CD8-positive, alpha-beta T cell (primary cell): ENCODE measurements at regions of chr20 and their contacts with region 1.

Region 1: GRCh38 chr20:51541189-51542032 is 1.1 kb downstream of the NFATC2 start:
- DNase-seq: peak; percentile 63 to 96 (median 81)
- ATAC-seq: peak; percentile 76
- H3K4me3 ChIP-seq: peak overlapping the region; percentile 57 to 82
- H3K4me3 Mint-ChIP-seq: peak overlapping the region; percentile 97
- H3K27ac ChIP-seq: peak overlapping the region; percentile 76 to 92
- H3K27ac Mint-ChIP-seq: peak overlapping the region; percentile 99
- H3K4me1 ChIP-seq: peaks cover 52% of the 10 kb centered on the region
- H3K4me1 Mint-ChIP-seq: peaks cover 57% of the 10 kb centered on the region
- H3K27me3 ChIP-seq: no peaks in the 10 kb centered on the region
- H3K27me3 Mint-ChIP-seq: no peaks in the 10 kb centered on the region
- CTCF ChIP-seq: no peak

Region 2: GRCh38 chr20:51298141-51298749 is 243.2 kb before region 1 on chr20:
- CTCF ChIA-PET with region 1: no interaction called
- POLR2A ChIA-PET with region 1: no interaction called
- intact Hi-C with region 1: no loop called
- DNase-seq: no peak
- ATAC-seq: no peak
- H3K4me3 ChIP-seq: no peak overlapping the region
- H3K4me3 Mint-ChIP-seq: no peak overlapping the region
- H3K27ac ChIP-seq: no peak overlapping the region
- H3K27ac Mint-ChIP-seq: no peak overlapping the region
- H3K4me1 ChIP-seq: no peaks in the 10 kb centered on the region
- H3K4me1 Mint-ChIP-seq: no peaks in the 10 kb centered on the region
- H3K27me3 ChIP-seq: no peaks in the 10 kb centered on the region
- H3K27me3 Mint-ChIP-seq: peaks cover 16% of the 10 kb centered on the region
- CTCF ChIP-seq: no peak

Region 3: GRCh38 chr20:51385646-51386530 is 155.5 kb before region 1 on chr20:
- CTCF ChIA-PET with region 1: interaction called, 7 read pairs
- POLR2A ChIA-PET with region 1: no interaction called
- intact Hi-C with region 1: loop called in 1 of 2 experiments (anchors 5 kb)
- DNase-seq: peak in 6 of 9 experiments; percentile 7 to 71 (median 31)
- ATAC-seq: peak; percentile 56
- H3K4me3 ChIP-seq: no peak overlapping the region
- H3K4me3 Mint-ChIP-seq: no peak overlapping the region
- H3K27ac ChIP-seq: peak overlapping the region in 1 of 2 experiments; percentile 23
- H3K27ac Mint-ChIP-seq: peak overlapping the region; percentile 75
- H3K4me1 ChIP-seq: peaks cover 9% of the 10 kb centered on the region
- H3K4me1 Mint-ChIP-seq: peaks cover 38% of the 10 kb centered on the region
- H3K27me3 ChIP-seq: no peaks in the 10 kb centered on the region
- H3K27me3 Mint-ChIP-seq: no peaks in the 10 kb centered on the region
- CTCF ChIP-seq: peak; percentile 48

Region 4: GRCh38 chr20:51423290-51423667 is 118.1 kb before region 1 on chr20:
- CTCF ChIA-PET with region 1: no interaction called
- POLR2A ChIA-PET with region 1: interaction called, 3 read pairs
- intact Hi-C with region 1: loop called in 1 of 2 experiments (anchors 5 kb)
- DNase-seq: no peak
- ATAC-seq: no peak
- H3K4me3 ChIP-seq: no peak overlapping the region
- H3K4me3 Mint-ChIP-seq: no peak overlapping the region
- H3K27ac ChIP-seq: peak overlapping the region in 1 of 2 experiments; percentile 74
- H3K27ac Mint-ChIP-seq: peak overlapping the region; percentile 85
- H3K4me1 ChIP-seq: peaks cover 21% of the 10 kb centered on the region
- H3K4me1 Mint-ChIP-seq: peaks cover 49% of the 10 kb centered on the region
- H3K27me3 ChIP-seq: no peaks in the 10 kb centered on the region
- H3K27me3 Mint-ChIP-seq: no peaks in the 10 kb centered on the region
- CTCF ChIP-seq: no peak

Region 5: DNA sequence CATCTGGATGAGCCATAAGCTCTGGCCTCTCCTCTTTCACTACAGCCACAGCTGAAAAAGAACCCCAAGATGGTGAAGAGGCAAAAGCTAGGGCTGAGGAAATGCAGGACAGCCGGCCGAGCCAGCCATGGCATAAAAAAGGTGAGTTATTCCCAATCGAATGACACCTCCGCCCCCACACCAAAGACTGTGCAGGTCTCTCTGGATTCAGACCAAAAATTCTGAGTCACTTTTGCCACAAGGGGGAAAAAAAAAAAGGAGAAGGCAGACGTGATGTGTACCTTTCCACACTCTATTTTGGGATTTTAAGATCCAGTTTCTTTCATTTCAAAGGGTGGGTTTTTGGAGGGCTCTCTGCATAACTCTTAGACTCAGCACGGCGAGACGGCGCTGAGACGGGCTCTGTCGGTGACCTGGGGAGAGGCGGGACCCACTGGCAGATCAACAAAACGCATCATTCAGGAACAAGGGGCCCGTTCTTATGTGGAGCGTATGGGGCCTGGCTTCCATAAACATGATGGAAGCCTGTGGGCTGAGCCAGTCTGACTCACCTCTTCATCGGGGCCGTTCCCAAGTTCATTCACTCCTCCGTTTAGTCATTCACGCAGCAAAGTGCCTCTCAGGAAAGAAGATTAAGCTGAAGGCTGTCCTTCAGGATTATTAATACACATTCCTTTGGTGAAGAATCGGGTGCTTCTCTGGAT is 53.7 kb before region 1 on chr20:
- CTCF ChIA-PET with region 1: no interaction called
- POLR2A ChIA-PET with region 1: no interaction called
- intact Hi-C with region 1: no loop called
- DNase-seq: no peak
- ATAC-seq: no peak
- H3K4me3 ChIP-seq: no peak overlapping the region
- H3K4me3 Mint-ChIP-seq: no peak overlapping the region
- H3K27ac ChIP-seq: no peak overlapping the region
- H3K27ac Mint-ChIP-seq: no peak overlapping the region
- H3K4me1 ChIP-seq: peaks cover 12% of the 10 kb centered on the region
- H3K4me1 Mint-ChIP-seq: peaks cover 57% of the 10 kb centered on the region
- H3K27me3 ChIP-seq: no peaks in the 10 kb centered on the region
- H3K27me3 Mint-ChIP-seq: no peaks in the 10 kb centered on the region
- CTCF ChIP-seq: no peak

Region 6: DNA sequence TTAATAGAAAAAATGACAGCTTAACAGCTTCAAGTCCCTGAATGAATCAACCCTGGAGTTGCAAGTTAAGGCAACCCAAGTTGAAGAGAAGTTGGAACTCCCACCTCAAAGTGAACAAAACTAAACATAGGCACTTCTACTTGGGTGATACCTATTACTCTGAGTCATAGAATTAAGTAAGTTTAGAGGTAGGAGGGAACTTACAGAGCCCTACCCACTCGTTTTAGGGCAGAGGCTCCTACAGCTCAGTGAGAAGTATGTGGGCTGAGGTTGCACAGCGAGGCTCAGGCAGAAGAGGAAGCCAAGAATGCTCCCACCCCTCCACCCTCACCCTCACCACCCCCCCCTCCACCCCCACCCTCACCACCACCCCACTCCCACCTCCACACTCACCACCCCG is 41.1 kb before region 1 on chr20:
- CTCF ChIA-PET with region 1: interaction called, 11 read pairs
- POLR2A ChIA-PET with region 1: interaction called, 11 read pairs
- intact Hi-C with region 1: loop called (anchors 1 kb)
- DNase-seq: peak in 7 of 9 experiments; percentile 38 to 92 (median 66)
- ATAC-seq: peak; percentile 83
- H3K4me3 ChIP-seq: no peak overlapping the region
- H3K4me3 Mint-ChIP-seq: no peak overlapping the region
- H3K27ac ChIP-seq: peak overlapping the region in 1 of 2 experiments; percentile 69
- H3K27ac Mint-ChIP-seq: peak overlapping the region; percentile 90
- H3K4me1 ChIP-seq: peaks cover 67% of the 10 kb centered on the region
- H3K4me1 Mint-ChIP-seq: peaks cover 86% of the 10 kb centered on the region
- H3K27me3 ChIP-seq: no peaks in the 10 kb centered on the region
- H3K27me3 Mint-ChIP-seq: no peaks in the 10 kb centered on the region
- CTCF ChIP-seq: no peak

Region 7: GRCh38 chr20:51529081-51529681 is 12.2 kb before region 1 on chr20:
- CTCF ChIA-PET with region 1: interaction called, 4 read pairs
- POLR2A ChIA-PET with region 1: interaction called, 5 read pairs
- intact Hi-C with region 1: loop called in 1 of 2 experiments (anchors 1 kb)
- DNase-seq: peak in 5 of 9 experiments; percentile 26 to 70 (median 44)
- ATAC-seq: peak; percentile 3
- H3K4me3 ChIP-seq: peak overlapping the region in 1 of 2 experiments; percentile 10
- H3K4me3 Mint-ChIP-seq: peak overlapping the region; percentile 58
- H3K27ac ChIP-seq: peak overlapping the region; percentile 19 to 81
- H3K27ac Mint-ChIP-seq: peak overlapping the region; percentile 83
- H3K4me1 ChIP-seq: peaks cover 96% of the 10 kb centered on the region
- H3K4me1 Mint-ChIP-seq: peaks cover 92% of the 10 kb centered on the region
- H3K27me3 ChIP-seq: no peaks in the 10 kb centered on the region
- H3K27me3 Mint-ChIP-seq: no peaks in the 10 kb centered on the region
- CTCF ChIP-seq: no peak